WTC11 (cell line): ENCODE measurements at regions of chr21 and their contacts with region 1.

Region 1: GRCh38 chr21:34510148-34511142 is 1.6 kb downstream of the KCNE1 start:
- DNase-seq: peak; percentile 90
- ATAC-seq: peak; percentile 95
- H3K4me3 Mint-ChIP-seq: no peak overlapping the region
- H3K27ac Mint-ChIP-seq: no peak overlapping the region
- H3K4me1 Mint-ChIP-seq: no peaks in the 10 kb centered on the region; the same call in 1 of the 2 replicates
- H3K27me3 Mint-ChIP-seq: no peaks in the 10 kb centered on the region
- CTCF ChIP-seq: peak; percentile 75

Region 2: DNA sequence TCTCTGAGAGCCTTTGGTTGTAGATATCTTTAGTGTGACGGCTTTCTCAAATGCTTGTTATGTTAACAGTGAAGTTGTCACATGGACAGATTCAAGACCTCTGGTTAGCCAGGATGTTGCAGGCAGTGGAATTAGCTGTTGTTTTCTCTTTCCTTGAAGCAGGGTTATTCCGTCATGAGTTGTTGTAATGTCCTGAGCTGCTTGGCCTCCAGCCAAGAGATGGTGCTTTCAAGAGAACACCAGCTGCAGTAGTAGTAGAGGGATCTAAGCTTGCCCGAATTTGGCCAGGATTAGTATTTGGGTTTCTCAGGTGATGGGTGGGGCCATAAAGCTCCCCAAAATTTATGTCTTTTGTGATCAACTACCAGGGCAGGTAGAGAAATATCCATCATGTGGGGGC is 11.8 kb before region 1 on chr21:
- CTCF ChIA-PET with region 1: interaction called, 13 read pairs
- POLR2A ChIA-PET with region 1: interaction called, 5 read pairs
- DNase-seq: no peak
- ATAC-seq: no peak
- H3K4me3 Mint-ChIP-seq: no peak overlapping the region
- H3K27ac Mint-ChIP-seq: no peak overlapping the region
- H3K4me1 Mint-ChIP-seq: no peaks in the 10 kb centered on the region
- H3K27me3 Mint-ChIP-seq: peaks cover 6% of the 10 kb centered on the region
- CTCF ChIP-seq: no peak

Region 3: GRCh38 chr21:34526618-34527290 is 16.3 kb after region 1 on chr21:
- CTCF ChIA-PET with region 1: interaction called, 35 read pairs
- POLR2A ChIA-PET with region 1: no interaction called
- DNase-seq: peak; percentile 42
- ATAC-seq: peak; percentile 53
- H3K4me3 Mint-ChIP-seq: peak overlapping the region; percentile 12; the same call in 1 of the 2 replicates
- H3K27ac Mint-ChIP-seq: peak overlapping the region; percentile 89
- H3K4me1 Mint-ChIP-seq: peaks cover 68% of the 10 kb centered on the region
- H3K27me3 Mint-ChIP-seq: peaks cover 6% of the 10 kb centered on the region
- CTCF ChIP-seq: no peak

Region 4: GRCh38 chr21:34544032-34544496 is 33.6 kb after region 1 on chr21:
- CTCF ChIA-PET with region 1: interaction called, 30 read pairs
- POLR2A ChIA-PET with region 1: no interaction called
- DNase-seq: peak; percentile 66
- ATAC-seq: peak; percentile 86
- H3K4me3 Mint-ChIP-seq: no peak overlapping the region
- H3K27ac Mint-ChIP-seq: no peak overlapping the region
- H3K4me1 Mint-ChIP-seq: peaks cover 9% of the 10 kb centered on the region
- H3K27me3 Mint-ChIP-seq: 0 out of 2 replicates have a peak, but pooled peaks cover 6% of the 10 kb centered on the region
- CTCF ChIP-seq: peak; percentile 58

Region 5: GRCh38 chr21:34582506-34583150 is 72.2 kb after region 1 on chr21:
- CTCF ChIA-PET with region 1: interaction called, 82 read pairs
- POLR2A ChIA-PET with region 1: no interaction called
- DNase-seq: no peak
- ATAC-seq: peak; percentile 95
- H3K4me3 Mint-ChIP-seq: no peak overlapping the region
- H3K27ac Mint-ChIP-seq: peak overlapping the region; percentile 81; the same call in 1 of the 2 replicates
- H3K4me1 Mint-ChIP-seq: peaks cover 10% of the 10 kb centered on the region; the same call in 1 of the 2 replicates
- H3K27me3 Mint-ChIP-seq: no peaks in the 10 kb centered on the region
- CTCF ChIP-seq: 0 out of 2 replicates have a peak, but pooled peaks have one; percentile 10

Region 6: DNA sequence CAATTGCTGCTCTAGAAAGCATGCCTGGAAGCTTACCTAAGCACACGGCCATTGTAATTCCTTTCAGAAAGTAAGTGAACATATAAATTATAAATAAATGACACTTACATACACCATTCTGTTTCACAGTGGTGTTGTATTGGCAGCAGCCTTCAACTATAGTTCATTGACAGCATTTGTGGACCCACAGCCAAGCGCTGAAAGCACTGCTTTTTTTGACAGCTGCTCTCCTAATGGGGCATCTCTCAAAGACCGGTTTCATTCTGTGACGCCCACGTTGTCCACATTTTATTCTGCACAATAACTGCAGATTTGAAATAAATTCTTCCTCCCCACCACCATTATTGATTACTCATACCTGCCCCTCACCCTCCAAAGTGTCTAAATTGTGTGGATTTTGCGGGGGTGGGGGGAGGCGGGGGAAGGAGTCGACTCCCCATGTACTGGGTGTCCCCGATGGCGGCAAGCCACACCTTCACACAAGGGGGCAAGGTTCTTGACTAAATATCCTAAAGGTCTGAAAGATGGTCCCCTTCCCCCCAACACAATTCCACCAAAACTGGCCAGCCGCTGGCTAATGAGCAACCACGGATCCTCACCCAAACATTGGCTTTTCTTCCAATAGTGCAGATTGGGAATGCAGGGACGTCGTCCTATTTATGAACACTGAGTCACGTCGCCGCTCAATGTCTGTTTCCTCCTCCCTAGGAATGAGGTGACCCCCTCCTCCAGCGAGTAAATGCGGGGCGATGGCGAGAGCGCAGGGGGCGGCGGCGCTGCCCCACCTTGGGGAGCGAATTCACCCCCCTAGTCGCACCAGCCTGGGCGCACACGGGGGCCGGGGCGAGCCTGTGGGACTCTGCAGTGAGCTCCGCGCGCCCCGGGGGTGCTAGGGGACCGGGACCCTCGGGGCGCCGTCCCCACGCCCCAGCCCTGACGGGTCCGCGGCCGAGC is 103.5 kb after region 1 on chr21:
- CTCF ChIA-PET with region 1: interaction called, 10 read pairs
- POLR2A ChIA-PET with region 1: no interaction called
- DNase-seq: no peak
- ATAC-seq: no peak
- H3K4me3 Mint-ChIP-seq: peak overlapping the region; percentile 76
- H3K27ac Mint-ChIP-seq: no peak overlapping the region
- H3K4me1 Mint-ChIP-seq: peaks cover 7% of the 10 kb centered on the region; the same call in 1 of the 2 replicates
- H3K27me3 Mint-ChIP-seq: peaks cover 44% of the 10 kb centered on the region
- CTCF ChIP-seq: no peak

Region 7: DNA sequence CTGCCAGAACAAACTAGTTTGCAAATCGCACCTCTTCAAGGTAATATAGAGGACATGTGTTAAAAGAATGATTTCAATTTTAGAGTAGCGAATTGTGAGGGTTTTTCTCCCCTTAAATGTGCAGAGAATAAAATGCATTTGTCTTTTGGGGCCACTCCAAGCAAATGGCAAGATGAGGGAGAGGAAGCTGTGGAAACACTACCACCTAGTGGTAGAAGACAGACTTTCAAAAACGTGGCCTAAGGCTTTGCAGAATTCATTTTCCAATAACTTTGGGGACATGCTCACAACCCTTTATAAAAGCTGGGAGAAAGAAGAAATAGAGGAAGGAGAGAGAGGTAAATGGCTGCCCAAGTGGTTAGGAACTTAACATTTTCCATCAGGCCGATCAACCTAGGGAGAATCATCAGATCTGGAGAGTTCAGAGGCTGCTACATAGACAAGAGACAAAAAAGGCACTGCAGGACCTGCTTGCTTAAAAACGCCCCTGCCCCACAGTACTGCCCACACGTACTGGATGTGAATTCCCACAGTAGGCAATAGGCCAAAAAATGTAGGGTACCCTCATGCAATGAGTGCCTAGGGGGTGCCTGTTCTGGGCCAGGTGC is 120.2 kb after region 1 on chr21:
- CTCF ChIA-PET with region 1: interaction called, 27 read pairs
- POLR2A ChIA-PET with region 1: no interaction called
- DNase-seq: no peak
- ATAC-seq: peak; percentile 68
- H3K4me3 Mint-ChIP-seq: no peak overlapping the region
- H3K27ac Mint-ChIP-seq: no peak overlapping the region
- H3K4me1 Mint-ChIP-seq: no peaks in the 10 kb centered on the region
- H3K27me3 Mint-ChIP-seq: peaks cover 3% of the 10 kb centered on the region; the same call in 1 of the 2 replicates
- CTCF ChIP-seq: peak; percentile 55; the same call in 1 of the 2 replicates